GM12878 (cell line): ENCODE measurements at regions of chr2 and their contacts with region 1.

Region 1: DNA sequence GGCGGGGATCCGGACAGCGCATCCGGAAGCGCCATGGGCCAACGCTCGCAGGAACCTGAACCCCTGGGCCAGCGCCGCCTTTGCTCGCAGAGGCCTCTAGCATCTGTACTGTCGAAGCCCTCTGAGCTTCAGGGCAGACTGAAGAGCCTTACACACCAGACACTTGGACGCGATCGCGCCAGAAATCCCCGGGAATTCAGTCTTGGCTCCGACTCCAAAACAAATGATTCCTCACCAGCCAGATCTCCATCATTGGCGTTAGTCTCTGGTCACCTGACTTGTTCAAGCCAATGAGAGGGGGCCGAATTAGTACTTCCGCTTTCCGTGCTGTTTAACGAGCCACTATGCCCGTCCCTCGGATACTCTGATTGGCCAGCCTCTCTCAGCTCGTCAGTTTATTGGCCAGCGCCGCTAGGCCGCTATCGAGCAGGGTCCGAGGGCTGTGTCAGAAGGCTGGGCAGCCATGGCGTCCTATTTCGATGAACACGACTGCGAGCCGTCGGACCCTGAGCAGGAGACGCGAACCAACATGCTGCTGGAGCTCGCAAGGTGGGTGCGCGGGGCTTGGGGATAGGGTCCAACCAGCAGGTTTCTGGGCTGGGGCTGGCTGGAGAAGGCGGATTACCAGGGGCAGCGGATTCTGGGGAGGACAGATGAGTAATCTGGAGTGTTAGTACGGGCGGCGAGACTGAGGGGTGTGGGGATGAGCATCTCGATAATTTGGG is at the start of gene RNF181:
- DNase-seq: peak; percentile 94
- ATAC-seq: peak; percentile 100
- H3K4me3 ChIP-seq: peak within 1 kb of the TSS; percentile 97
- H3K27ac ChIP-seq: peak within 1 kb of the TSS; percentile 89
- H3K4me1 ChIP-seq: peaks cover 9% of the 10 kb centered on the region
- H3K27me3 ChIP-seq: no peaks in the 10 kb centered on the region
- CTCF ChIP-seq: no peak
- EP300 ChIP-seq: no peak
- POLR2A ChIP-seq: peak; percentile 97
- RAD21 ChIP-seq: no peak
- polyA plus RNA-seq, gene RNF181: 354 to 368 TPM

Region 2: GRCh38 chr2:85561317-85561979 is 34.0 kb before region 1 on chr2 and contains the start of gene GGCX:
- CTCF ChIA-PET with region 1: interaction called, 3 read pairs
- POLR2A ChIA-PET with region 1: interaction called, 32 read pairs
- RAD21 ChIA-PET with region 1: no interaction called
- SMC1A ChIA-PET with region 1: interaction called, 17 read pairs
- in situ Hi-C with region 1: no loop called
- intact Hi-C with region 1: no loop called
- DNase-seq: peak; percentile 73
- ATAC-seq: peak; percentile 97
- H3K4me3 ChIP-seq: peak within 1 kb of the TSS; percentile 98
- H3K27ac ChIP-seq: peak within 1 kb of the TSS; percentile 71
- H3K4me1 ChIP-seq: no peaks in the 10 kb centered on the region; the same call in 1 of the 2 replicates
- H3K27me3 ChIP-seq: no peaks in the 10 kb centered on the region
- CTCF ChIP-seq: no peak
- EP300 ChIP-seq: 0 out of 4 replicates have a peak, but pooled peaks of 1 of the 2 experiments have one; percentile 14
- POLR2A ChIP-seq: peak; percentile 97
- RAD21 ChIP-seq: no peak
- polyA plus RNA-seq, gene GGCX: 46.6 to 52.7 TPM

Region 3: GRCh38 chr2:85577386-85578242 is 17.8 kb before region 1 on chr2 and contains the start of gene VAMP8:
- CTCF ChIA-PET with region 1: interaction called, 5 read pairs
- POLR2A ChIA-PET with region 1: interaction called, 57 read pairs
- RAD21 ChIA-PET with region 1: interaction called, 9 read pairs
- SMC1A ChIA-PET with region 1: interaction called, 20 read pairs
- in situ Hi-C with region 1: no loop called
- intact Hi-C with region 1: no loop called
- DNase-seq: no peak
- ATAC-seq: peak; percentile 86
- H3K4me3 ChIP-seq: peak within 1 kb of the TSS; percentile 77
- H3K27ac ChIP-seq: peak within 1 kb of the TSS; percentile 77
- H3K4me1 ChIP-seq: peaks cover 13% of the 10 kb centered on the region
- H3K27me3 ChIP-seq: no peaks in the 10 kb centered on the region
- CTCF ChIP-seq: no peak
- EP300 ChIP-seq: no peak
- POLR2A ChIP-seq: peak; percentile 72
- RAD21 ChIP-seq: no peak
- polyA plus RNA-seq, gene VAMP8: 544 to 744 TPM

Region 4: GRCh38 chr2:85611705-85612587 is 16.5 kb after region 1 on chr2 and contains the start of gene C2orf68:
- CTCF ChIA-PET with region 1: no interaction called
- POLR2A ChIA-PET with region 1: interaction called, 14 read pairs
- RAD21 ChIA-PET with region 1: no interaction called
- SMC1A ChIA-PET with region 1: interaction called, 4 read pairs
- in situ Hi-C with region 1: no loop called
- intact Hi-C with region 1: no loop called
- DNase-seq: peak; percentile 53
- ATAC-seq: peak; percentile 84
- H3K4me3 ChIP-seq: peak within 1 kb of the TSS; percentile 81
- H3K27ac ChIP-seq: peak within 1 kb of the TSS; percentile 55
- H3K4me1 ChIP-seq: no peaks in the 10 kb centered on the region
- H3K27me3 ChIP-seq: no peaks in the 10 kb centered on the region
- CTCF ChIP-seq: no peak
- EP300 ChIP-seq: no peak
- POLR2A ChIP-seq: peak; percentile 87
- RAD21 ChIP-seq: no peak
- polyA plus RNA-seq, gene C2orf68: 12.7 to 15.9 TPM